Activated T-helper 1 cell treated with anti-CD3 and anti-CD28 coated beads, Interleukin-12 subunit alpha, Interleukin-12 subunit beta, Interleukin-2, Interleukin-4 antibody, amounts not matched to agents 30 ng/mL and 10 ng/mL and 1 ng/mL, durations not matched to agents 14 hours and 24 hours and 36 hours (primary cell): ENCODE measurements at regions of chr5 and their contacts with region 1.

Region 1: DNA sequence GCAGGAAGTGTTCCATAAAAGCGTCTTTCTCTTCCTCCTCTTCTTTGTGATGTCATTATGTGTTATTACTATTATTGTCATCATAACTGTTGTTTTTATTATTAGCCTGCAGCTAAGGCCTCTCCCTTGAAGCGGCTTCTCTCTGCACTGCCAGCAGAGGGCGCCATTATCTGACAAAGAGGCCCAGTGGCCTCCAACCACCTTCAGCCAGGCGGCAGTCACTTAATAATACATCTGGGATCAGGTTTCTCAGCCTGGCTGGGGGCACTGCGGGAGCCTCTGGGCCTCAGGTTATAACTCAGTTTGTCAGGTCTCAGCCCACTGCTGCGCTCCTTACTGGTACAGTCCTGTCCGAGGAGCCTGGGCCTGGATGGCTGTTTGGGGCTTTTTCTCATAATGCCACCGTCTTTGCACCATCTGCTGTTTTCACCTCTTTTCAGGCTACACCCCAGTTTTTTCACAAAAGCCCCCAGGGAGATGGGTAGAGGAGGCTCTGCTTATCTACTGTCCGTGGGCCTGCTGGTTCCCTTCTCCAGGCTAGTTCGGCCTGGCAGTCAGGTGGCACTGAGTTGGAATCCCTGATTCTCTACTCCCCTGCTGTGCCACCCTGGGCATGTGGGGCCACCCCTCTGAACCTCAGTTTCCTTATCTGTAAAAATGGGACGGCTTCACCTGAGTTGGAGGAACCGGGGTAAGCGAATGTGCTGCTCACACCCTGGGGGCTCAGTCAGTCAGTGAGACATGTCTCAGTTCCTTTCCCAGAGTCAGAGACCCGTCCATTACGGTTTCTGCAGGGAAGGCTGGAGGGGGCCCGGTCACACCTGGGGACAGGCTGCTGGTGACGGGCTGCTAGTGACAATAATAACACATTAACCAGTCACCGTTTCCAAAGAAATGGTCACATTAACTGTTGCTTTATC is 282.1 kb downstream of the NSG2 start:
- DNase-seq: peak; percentile 25
- H3K4me3 Mint-ChIP-seq: no peak overlapping the region
- H3K27ac Mint-ChIP-seq: no peak overlapping the region
- H3K4me1 Mint-ChIP-seq: no peaks in the 10 kb centered on the region
- H3K27me3 Mint-ChIP-seq: no peaks in the 10 kb centered on the region

Region 2: DNA sequence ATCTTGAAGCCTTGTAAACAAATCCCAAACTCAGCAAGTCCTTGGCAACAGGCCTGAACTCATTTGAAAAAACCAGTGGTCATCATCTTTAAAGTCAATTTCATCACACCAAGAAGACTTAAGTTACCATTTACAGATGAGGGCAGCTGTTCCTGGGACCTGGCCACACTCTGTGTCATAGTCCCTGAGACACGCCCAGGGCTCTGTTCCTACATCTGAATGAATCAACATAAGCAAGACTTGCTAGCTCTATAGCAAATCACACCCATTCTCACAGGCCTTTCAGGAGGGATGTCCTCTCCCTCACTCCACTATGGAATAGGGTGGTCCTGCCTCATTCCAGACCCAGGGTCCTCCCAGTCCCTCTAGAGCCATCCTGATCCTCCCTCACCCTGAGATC is 139.3 kb before region 1 on chr5:
- intact Hi-C with region 1: no loop called
- DNase-seq: no peak
- H3K4me3 Mint-ChIP-seq: no peak overlapping the region
- H3K27ac Mint-ChIP-seq: no peak overlapping the region
- H3K4me1 Mint-ChIP-seq: no peaks in the 10 kb centered on the region
- H3K27me3 Mint-ChIP-seq: peaks cover 2% of the 10 kb centered on the region

Region 3: DNA sequence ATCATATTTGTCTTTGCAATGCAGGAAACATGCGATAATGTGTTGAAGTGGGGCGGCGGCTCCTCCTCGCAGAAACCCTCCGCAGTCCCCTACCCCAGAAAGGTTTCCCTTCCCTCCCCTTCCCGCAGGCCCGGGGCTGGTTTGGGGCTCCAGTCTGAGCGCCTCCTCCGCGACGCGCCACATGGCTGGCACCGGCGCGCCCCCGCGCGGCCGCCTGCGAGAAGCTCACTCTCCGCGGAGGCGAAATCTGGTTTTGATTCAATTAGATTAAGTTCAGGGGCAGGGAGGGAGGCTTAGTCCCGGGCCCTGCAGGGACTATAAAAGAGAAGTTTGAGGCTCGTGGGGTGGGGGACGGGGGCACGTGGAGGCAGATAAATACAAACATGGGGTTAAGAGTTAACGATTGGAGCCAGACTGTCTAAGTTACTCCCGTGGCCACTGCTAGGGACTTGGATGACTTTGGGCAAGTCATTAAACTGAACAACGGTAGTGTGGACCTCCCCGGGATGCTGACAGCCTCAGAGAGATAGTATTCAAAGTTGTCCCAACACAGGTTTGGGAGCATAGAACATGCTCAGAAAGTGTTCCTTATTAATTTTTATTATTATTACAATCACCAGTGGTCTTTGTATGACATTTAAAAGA is 466.2 kb after region 1 on chr5:
- intact Hi-C with region 1: loop called (anchors 2 kb)
- DNase-seq: peak; percentile 26
- H3K4me3 Mint-ChIP-seq: no peak overlapping the region
- H3K27ac Mint-ChIP-seq: no peak overlapping the region
- H3K4me1 Mint-ChIP-seq: peaks cover 8% of the 10 kb centered on the region
- H3K27me3 Mint-ChIP-seq: peaks cover 4% of the 10 kb centered on the region